ENCODE measurements at regions of chr3 and their contacts with region 1.

Region 1: GRCh38 chr3:165359005-165359404 is 162.8 kb upstream of the SLITRK3 start:
- DNase-seq: no peak
- H3K4me3 ChIP-seq: no peak overlapping the region
- H3K27ac ChIP-seq: no peak overlapping the region
- H3K4me1 ChIP-seq: no peaks in the 10 kb centered on the region
- H3K27me3 ChIP-seq: no peaks in the 10 kb centered on the region
- CTCF ChIP-seq: no peak
- POLR2A ChIP-seq: no peak

Region 2: GRCh38 chr3:165464736-165465135 is 105.7 kb after region 1 on chr3:
- intact Hi-C with region 1: loop called (anchors 10 kb)
- DNase-seq: no peak
- H3K4me3 ChIP-seq: no peak overlapping the region
- H3K27ac ChIP-seq: no peak overlapping the region
- H3K4me1 ChIP-seq: no peaks in the 10 kb centered on the region
- H3K27me3 ChIP-seq: no peaks in the 10 kb centered on the region
- CTCF ChIP-seq: no peak
- POLR2A ChIP-seq: no peak

Region 3: DNA sequence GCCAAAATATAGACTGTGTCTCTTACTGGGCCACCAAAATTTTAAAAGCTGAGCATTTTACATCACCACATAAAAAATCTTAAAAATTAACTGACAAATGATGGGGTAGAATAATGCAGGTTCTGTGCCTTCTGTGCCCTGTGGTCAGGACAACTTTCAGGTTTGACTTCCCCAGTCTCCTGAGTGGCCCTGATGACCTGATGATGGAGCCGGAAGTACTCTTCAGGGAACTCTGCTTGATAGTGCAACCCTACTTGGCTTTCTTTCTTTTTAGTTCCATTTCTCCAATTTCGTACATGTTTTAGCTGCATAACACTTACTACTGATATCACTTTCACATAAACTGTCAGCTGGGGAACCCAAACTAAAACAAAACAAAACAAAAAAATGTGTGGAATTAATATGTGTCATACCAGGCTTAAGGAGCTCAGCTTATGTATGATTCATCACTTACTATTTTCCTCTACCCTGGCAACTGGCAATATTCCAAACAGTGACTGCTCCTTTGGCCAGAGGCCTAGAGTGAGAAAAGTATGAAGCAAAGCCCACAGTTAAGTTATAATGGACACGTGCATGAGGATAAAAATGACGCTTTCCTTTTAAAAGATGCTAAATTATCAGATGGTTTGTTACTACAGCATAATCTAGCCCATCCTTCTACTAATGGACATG is 283.9 kb after region 1 on chr3:
- intact Hi-C with region 1: loop called (anchors 10 kb)
- DNase-seq: peak; percentile 20
- H3K4me3 ChIP-seq: no peak overlapping the region
- H3K27ac ChIP-seq: no peak overlapping the region
- H3K4me1 ChIP-seq: no peaks in the 10 kb centered on the region
- H3K27me3 ChIP-seq: no peaks in the 10 kb centered on the region
- CTCF ChIP-seq: no peak
- POLR2A ChIP-seq: no peak

Measured in prostate gland (tissue), 2 donors.